GM18951 (cell line): ENCODE measurements at regions of chr11 and their contacts with region 1.

Region 1: DNA sequence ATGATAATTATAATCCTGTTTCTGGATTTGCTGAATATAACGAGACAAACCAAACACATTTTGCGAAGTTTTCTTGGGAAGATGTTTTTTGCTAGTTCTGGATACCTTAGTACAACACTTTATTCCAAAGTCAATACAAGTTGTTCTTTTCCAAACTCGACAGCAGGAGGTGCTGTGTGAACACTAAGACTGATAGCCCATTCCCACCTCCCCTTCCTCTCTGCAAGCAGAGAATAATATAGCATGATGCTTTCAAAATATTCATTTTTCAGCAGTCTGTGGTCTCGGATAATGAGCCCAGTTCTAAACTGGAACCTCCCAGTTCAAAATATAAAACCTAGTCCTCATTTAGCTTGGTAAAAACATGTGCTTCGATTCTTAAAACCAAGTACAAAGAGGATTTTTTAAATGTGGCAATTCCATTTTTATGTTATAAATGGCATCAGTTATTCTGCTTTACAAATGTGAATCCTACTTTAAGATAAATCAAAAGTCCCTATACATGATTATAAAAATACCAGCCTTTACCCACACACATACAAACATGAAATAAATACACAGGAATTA is 129.1 kb downstream of the DCDC1 start:
- POLR2A ChIP-seq: no peak

Region 2: GRCh38 chr11:30914143-30914762 is 326.2 kb before region 1 on chr11:
- in situ Hi-C with region 1: no loop called
- POLR2A ChIP-seq: no peak

Region 3: DNA sequence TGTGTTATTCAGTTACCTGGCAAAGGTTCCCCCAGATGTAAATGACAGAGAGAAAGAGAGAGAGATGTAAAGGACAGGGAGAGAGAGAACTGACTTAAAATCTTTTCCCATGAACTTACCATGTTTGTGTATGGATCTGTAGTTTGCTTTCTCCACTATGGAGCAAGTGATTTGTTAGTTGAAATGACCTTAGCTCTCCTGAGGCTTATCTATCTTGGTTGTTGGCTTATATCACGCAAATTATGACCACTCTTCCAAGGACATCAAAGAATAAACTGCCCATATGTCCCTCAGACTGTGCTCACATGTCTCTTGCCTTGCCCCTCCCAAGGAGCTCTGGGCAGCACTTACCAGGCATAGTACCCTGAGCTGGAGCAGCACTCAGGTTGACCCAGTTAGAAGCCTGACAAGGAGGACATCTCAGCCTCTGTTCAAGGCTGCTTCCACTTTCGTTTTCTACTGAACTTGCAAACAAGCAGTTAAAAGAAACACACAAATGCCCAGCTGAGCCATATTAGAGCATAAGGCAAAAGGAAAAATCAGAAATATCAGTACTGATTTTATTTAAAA is 755.2 kb after region 1 on chr11:
- in situ Hi-C with region 1: loop called (anchors 25 kb)
- POLR2A ChIP-seq: no peak

Region 4: GRCh38 chr11:32172848-32173834 is 932.7 kb after region 1 on chr11:
- in situ Hi-C with region 1: loop called (anchors 25 kb)
- POLR2A ChIP-seq: no peak